ENCODE measurements at regions of chr11 and their contacts with region 1.

Region 1: DNA sequence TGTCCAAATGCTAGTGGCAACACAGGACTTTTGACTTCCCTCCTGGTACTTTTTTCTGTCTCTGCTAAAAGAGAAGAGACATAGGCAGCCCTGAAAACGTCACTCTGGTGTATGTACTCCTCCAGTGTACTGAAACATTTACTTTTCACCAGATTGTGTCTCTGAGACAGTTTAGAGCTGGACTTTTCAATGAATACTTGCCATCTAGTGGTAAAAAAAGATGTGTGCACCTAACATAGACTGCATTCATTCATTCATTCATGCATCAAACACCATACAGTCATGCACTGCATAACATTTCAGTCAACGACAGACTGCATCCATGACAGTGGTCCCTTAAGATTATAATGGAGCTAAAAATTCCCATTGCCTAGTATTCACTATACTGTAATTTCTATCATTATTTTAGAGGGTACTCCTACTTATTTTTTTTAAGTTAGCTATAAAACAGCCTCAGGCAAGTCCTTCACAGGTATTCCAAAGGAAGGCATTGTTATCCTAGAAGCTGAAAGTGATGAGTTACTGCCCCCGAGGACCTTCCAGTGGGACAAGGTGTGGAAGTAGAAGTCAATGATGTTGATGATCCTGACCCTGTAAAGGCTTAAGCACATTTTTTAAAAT is 186.2 kb downstream of the SPON1 start:
- DNase-seq: no peak
- H3K4me3 ChIP-seq: no peak overlapping the region
- H3K27me3 ChIP-seq: no peaks in the 10 kb centered on the region
- CTCF ChIP-seq: peak; percentile 54

Region 2: GRCh38 chr11:13772223-13773046 is 376.3 kb before region 1 on chr11:
- CTCF ChIA-PET with region 1: interaction called, 14 read pairs
- POLR2A ChIA-PET with region 1: no interaction called
- DNase-seq: peak; percentile 8
- H3K4me3 ChIP-seq: no peak overlapping the region
- H3K27me3 ChIP-seq: peaks cover 5% of the 10 kb centered on the region
- CTCF ChIP-seq: peak; percentile 39

Region 3: DNA sequence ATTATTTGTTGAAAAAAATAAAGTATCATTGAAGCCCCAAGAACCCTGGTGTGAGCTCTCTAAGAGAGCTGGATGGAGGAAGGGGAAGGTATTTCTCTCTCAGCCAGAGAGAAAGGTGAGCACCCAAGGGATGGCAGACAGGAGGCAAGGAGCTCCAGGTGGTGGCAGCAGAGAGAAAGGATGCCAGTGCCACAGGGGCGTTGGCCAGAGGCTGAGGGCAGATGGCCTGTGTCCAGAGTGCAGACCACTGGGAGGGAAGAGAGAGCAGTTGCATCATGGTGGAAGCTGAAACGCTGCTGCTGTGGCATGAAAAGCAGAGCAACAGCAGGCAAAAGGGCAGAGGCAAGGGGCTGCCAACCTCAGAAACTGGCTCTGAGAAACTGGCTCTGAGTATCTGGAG is 177.8 kb before region 1 on chr11:
- CTCF ChIA-PET with region 1: interaction called, 24 read pairs
- POLR2A ChIA-PET with region 1: no interaction called
- DNase-seq: no peak
- H3K4me3 ChIP-seq: no peak overlapping the region
- H3K27me3 ChIP-seq: peaks cover 8% of the 10 kb centered on the region
- CTCF ChIP-seq: peak; percentile 28; the same call in 1 of the 2 replicates

Measured in BJ (cell line).